Gastrocnemius medialis (tissue), 4 donors: ENCODE measurements at regions of chr12 and their contacts with region 1.

Region 1: GRCh38 chr12:124620751-124621660 is 53.6 kb upstream of the NCOR2 start:
- DNase-seq: peak; percentile 50 to 78
- ATAC-seq: peak; percentile 70 to 89
- H3K4me3 ChIP-seq: no peak overlapping the region
- H3K27ac ChIP-seq: peak overlapping the region in 3 of 4 donors; percentile 35 to 48 (median 47)
- H3K4me1 ChIP-seq: peaks cover 21 to 24% of the 10 kb centered on the region in 2 donors
- H3K27me3 ChIP-seq: no peaks in the 10 kb centered on the region
- CTCF ChIP-seq: no peak
- POLR2A ChIP-seq: no peak

Region 2: DNA sequence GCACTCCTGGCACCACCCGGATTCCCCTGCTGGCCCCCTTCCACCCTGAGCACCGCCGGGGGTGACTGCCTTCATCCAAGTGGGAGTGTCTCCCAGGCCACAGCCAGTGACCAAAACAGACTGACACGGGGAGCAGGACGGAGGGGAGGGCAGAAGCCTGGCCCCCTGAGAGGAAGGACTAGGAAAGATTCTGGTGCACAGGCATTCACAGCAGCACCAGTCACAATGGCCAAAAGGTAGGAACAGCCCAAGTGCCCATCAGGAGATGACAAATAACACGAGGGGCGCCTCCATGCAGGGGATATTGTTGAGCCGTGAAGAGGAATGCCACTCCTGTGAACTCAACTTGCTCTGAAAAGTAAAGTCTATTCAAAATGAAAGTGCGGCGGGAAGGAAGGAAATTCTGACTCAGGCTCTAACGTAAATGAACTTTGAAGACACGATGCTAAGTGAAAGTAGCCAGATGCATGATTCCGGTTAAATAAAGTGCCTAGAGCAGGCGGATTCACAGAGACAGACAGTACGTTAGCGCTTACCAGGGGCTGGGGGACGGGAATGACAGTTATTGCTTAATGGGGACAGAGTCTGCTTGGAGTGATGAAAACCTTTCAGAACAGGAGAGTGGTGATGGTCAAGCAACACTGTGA is 92.6 kb after region 1 on chr12:
- in situ Hi-C with region 1: no loop called
- intact Hi-C with region 1: loop called (anchors 5 kb)
- DNase-seq: no peak
- ATAC-seq: peak; percentile 63 to 69
- H3K4me3 ChIP-seq: peak overlapping the region; percentile 12 to 53 (median 28)
- H3K27ac ChIP-seq: peak overlapping the region; percentile 70 to 85 (median 75)
- H3K4me1 ChIP-seq: peaks cover 6 to 17% of the 10 kb centered on the region in 2 donors
- H3K27me3 ChIP-seq: no peaks in the 10 kb centered on the region
- CTCF ChIP-seq: no peak
- POLR2A ChIP-seq: peak; percentile 24 to 42